ENCODE measurements at regions of chr7 and their contacts with region 1.

Region 1: DNA sequence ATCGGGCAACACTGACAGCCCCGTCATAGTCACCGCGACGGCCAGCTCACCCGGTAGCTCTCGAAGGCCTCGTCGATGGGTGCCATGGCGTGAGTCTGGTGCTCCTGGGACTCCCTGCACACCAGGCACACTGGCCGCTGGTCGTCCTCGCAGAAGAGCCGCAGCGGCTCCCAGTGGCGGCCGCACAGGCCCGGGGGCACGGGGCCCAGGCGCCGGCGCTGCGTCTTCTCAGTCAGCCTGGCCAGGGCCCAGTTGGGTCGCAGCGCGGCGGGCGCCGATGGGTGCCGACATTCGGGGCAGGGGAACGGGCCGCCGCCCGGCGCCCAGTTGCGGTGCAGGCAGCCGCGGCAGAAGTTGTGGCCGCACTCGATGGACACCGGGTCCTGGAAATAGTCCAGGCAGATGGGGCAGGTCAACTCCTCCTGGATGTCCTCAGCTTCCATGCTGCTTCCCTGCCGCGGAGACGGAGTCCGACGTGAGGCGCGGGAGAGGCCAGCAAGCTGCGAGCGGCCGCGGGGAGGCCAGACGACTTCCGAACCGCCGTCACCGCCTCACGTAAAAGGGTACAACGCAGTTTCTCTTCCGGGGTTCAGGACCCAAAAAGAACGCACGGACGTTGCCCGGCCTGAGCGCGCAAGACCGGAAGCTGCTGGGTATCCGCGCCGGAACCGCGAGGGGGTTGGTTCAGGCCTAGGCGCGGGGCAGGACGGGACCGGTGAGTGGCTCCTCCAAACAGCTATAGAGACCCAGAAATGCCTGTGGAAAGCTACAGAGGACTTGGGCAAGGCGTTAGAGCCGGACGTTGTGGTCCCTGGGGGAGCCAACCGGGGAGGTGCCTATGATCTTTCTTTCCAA is at the start of gene TRIM4:
- DNase-seq: peak; percentile 80
- ATAC-seq: peak; percentile 97
- H3K4me3 Mint-ChIP-seq: peak within 1 kb of the TSS; percentile 94
- H3K27ac Mint-ChIP-seq: peak within 1 kb of the TSS; percentile 93
- H3K4me1 Mint-ChIP-seq: peaks cover 49% of the 10 kb centered on the region
- H3K27me3 Mint-ChIP-seq: no peaks in the 10 kb centered on the region
- CTCF ChIP-seq: no peak
- total RNA-seq, gene TRIM4: 33.1 and 35.8 TPM in 2 replicates

Region 2: DNA sequence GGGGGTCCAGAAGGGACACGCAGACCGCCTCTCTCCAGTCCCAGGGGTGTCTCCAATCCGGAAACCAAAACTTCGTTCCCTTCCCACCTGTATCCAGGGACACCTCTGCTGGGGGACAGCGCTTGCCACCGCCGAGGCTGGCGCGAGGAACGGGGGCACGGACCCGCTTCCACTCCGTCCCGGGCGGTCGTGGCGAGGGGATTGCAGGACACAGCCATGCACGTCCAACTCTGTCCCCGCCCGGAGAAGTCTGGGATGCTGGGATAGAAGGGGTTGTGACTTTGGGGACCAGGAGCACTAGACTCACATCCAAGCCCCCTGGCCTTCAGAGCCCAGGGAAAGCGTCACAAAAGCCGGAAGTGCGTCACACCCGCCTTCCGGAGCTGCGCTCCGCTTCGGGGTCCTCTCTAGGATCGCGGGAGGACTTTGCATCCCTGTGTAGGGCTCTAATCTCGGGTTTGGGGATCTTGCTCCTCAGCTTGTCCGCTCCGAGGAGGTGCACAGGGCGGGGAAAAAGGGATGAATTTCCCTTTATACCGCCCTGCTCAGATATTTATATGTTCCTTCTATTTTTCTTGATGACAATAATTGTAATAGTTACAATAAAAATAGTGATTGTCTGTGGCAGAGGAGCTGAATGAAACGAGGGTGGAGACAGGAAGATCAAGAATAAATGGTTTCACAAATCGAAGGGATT is 367.3 kb before region 1 on chr7 and contains the start of gene FAM200A:
- CTCF ChIA-PET with region 1: no interaction called
- POLR2A ChIA-PET with region 1: interaction called, 10 read pairs
- intact Hi-C with region 1: loop called (anchors 10 kb)
- DNase-seq: peak; percentile 78
- ATAC-seq: peak; percentile 98
- H3K4me3 Mint-ChIP-seq: peak within 1 kb of the TSS; percentile 91
- H3K27ac Mint-ChIP-seq: peak within 1 kb of the TSS; percentile 87
- H3K4me1 Mint-ChIP-seq: peaks cover 33% of the 10 kb centered on the region
- H3K27me3 Mint-ChIP-seq: no peaks in the 10 kb centered on the region
- CTCF ChIP-seq: no peak
- total RNA-seq, gene FAM200A: 9.2 and 9.3 TPM in 2 replicates

Region 3: DNA sequence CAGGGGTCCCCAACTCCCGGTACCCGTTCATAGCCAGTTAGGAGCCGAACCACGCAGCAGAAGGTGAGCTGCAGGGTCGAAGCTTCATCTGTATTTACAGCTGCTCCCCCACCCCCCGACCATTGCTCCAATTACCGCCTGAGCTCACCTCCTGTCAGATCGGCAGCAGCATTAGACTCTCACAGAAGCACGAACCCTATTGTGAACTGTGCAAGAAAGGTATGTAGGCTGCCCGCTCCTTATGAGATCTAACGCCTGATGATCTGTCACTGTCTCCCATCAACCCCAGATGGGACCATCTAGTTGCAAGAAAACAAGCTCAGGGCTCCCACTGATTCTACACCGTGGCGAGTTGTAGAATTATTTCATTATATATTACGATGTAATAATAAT is 71.3 kb after region 1 on chr7:
- CTCF ChIA-PET with region 1: interaction called, 19 read pairs
- POLR2A ChIA-PET with region 1: interaction called, 3 read pairs
- intact Hi-C with region 1: no loop called
- DNase-seq: no peak
- ATAC-seq: no peak
- H3K4me3 Mint-ChIP-seq: no peak overlapping the region
- H3K27ac Mint-ChIP-seq: no peak overlapping the region
- H3K4me1 Mint-ChIP-seq: peaks cover 3% of the 10 kb centered on the region
- H3K27me3 Mint-ChIP-seq: peaks cover 20% of the 10 kb centered on the region
- CTCF ChIP-seq: no peak

Region 4: GRCh38 chr7:100119062-100119700 is 200.0 kb after region 1 on chr7 and contains the starts of genes CNPY4 and TAF6:
- CTCF ChIA-PET with region 1: no interaction called
- POLR2A ChIA-PET with region 1: no interaction called
- intact Hi-C with region 1: loop called (anchors 2 kb)
- DNase-seq: peak; percentile 88
- ATAC-seq: peak; percentile 86
- H3K4me3 Mint-ChIP-seq: peak within 1 kb of the TSS; percentile 98
- H3K27ac Mint-ChIP-seq: peak within 1 kb of the TSS; percentile 99
- H3K4me1 Mint-ChIP-seq: peaks cover 29% of the 10 kb centered on the region
- H3K27me3 Mint-ChIP-seq: no peaks in the 10 kb centered on the region
- CTCF ChIP-seq: no peak
- total RNA-seq, gene CNPY4: 7.1 and 8.6 TPM in 2 replicates
- total RNA-seq, gene TAF6: 42.6 and 54.9 TPM in 2 replicates

Region 5: GRCh38 chr7:100342765-100343164 is 423.6 kb after region 1 on chr7:
- CTCF ChIA-PET with region 1: no interaction called
- POLR2A ChIA-PET with region 1: no interaction called
- intact Hi-C with region 1: loop called (anchors 10 kb)
- DNase-seq: no peak
- ATAC-seq: no peak
- H3K4me3 Mint-ChIP-seq: no peak overlapping the region
- H3K27ac Mint-ChIP-seq: peak overlapping the region; percentile 76
- H3K4me1 Mint-ChIP-seq: peaks cover 43% of the 10 kb centered on the region
- H3K27me3 Mint-ChIP-seq: no peaks in the 10 kb centered on the region
- CTCF ChIP-seq: no peak